ENCODE measurements at regions of chr19 and their contacts with region 1.

Region 1: DNA sequence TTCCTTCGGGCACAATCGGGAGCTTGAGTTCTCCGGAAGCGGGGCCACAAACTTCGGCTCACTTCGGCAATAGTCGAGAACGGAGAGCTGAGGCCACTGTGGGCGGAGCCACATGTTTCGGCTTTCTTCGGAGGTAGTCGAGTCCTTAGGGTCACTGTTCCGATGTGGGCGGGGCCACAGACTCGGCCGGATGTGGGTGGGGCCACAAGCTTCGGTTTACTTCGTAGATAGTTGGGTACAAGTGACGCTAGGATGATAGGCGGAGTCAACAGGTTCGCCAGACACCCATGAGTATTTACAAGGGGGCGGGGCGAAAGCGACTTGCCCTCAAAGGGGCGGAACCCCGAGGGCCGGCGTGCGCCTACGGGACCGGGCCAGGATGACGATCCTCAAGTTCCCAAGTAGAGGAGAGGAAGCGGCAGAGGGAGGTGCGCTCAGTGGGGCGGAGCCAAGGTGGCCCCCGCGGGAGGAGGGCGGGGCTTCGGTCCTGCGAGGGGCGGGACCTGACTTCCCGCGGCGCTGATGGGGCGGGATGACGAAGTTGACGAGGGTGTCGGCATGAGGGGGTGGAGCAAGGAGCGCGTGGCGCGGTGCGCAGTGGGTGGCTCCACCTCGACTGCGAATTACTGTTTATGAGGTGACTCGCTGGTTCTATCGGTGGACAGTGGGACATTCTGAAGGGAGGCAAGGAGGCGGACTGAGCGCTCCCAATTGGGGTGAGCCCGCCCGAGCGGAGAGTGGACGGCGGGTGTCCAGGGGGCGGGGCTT is 539 bp upstream of the MBOAT7 start:
- DNase-seq: peak; percentile 100
- H3K4me3 Mint-ChIP-seq: peak overlapping the region; percentile 85
- H3K27ac Mint-ChIP-seq: peak overlapping the region; percentile 99
- H3K4me1 Mint-ChIP-seq: peaks cover 41% of the 10 kb centered on the region
- H3K27me3 Mint-ChIP-seq: no peaks in the 10 kb centered on the region

Region 2: DNA sequence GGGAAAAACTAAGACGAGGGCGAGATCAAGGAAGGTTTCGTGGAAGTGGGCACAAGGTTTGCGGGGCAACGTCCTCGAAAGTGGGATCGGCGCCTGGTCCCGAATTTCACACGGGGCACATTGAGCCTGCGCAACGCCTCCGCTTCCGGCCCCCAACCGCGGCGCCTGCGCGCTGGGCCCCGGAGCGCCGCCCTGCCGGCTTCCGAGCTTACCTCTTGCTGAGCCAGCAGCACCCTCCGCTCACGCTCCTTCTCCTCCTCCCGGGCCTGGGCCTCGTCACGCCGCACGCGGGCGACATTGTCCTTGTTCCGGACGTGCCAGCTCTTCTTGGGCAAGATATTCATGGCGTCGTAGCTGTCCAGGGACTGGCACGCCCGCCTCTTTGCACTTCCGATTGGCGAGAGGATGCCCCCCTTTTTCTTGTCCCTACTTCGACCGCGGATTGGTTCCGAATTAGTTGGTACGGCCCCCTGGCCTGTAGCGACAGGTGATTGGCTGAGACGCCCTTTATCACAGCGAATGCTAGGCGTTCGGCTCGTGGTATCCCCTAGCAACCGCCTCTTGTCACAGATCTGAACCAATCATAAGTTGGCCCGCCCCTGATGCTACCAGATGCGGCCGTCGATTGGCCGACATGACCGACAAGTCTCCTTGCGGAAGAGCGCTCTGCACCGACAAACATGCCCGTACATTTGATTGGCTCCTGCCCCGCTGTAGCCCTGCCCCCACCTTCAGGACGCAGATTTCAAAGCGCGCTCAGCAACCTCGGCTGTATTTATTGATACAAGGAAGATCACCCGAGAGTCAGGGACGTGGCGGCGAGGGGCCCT is 30.4 kb before region 1 on chr19 and contains the start of gene LENG1:
- CTCF ChIA-PET with region 1: interaction called, 19 read pairs
- POLR2A ChIA-PET with region 1: interaction called, 19 read pairs
- DNase-seq: peak; percentile 100
- H3K4me3 Mint-ChIP-seq: peak within 1 kb of the TSS; percentile 94
- H3K27ac Mint-ChIP-seq: peak within 1 kb of the TSS; percentile 98
- H3K4me1 Mint-ChIP-seq: peaks cover 67% of the 10 kb centered on the region
- H3K27me3 Mint-ChIP-seq: peaks cover 1% of the 10 kb centered on the region
- total RNA-seq, gene LENG1: 8.3 to 9.2 TPM

Region 3: GRCh38 chr19:54168174-54168917 is 21.6 kb before region 1 on chr19:
- CTCF ChIA-PET with region 1: interaction called, 33 read pairs
- POLR2A ChIA-PET with region 1: interaction called, 13 read pairs
- DNase-seq: peak; percentile 90
- H3K4me3 Mint-ChIP-seq: no peak overlapping the region
- H3K27ac Mint-ChIP-seq: no peak overlapping the region
- H3K4me1 Mint-ChIP-seq: peaks cover 17% of the 10 kb centered on the region
- H3K27me3 Mint-ChIP-seq: peaks cover 1% of the 10 kb centered on the region

Region 4: DNA sequence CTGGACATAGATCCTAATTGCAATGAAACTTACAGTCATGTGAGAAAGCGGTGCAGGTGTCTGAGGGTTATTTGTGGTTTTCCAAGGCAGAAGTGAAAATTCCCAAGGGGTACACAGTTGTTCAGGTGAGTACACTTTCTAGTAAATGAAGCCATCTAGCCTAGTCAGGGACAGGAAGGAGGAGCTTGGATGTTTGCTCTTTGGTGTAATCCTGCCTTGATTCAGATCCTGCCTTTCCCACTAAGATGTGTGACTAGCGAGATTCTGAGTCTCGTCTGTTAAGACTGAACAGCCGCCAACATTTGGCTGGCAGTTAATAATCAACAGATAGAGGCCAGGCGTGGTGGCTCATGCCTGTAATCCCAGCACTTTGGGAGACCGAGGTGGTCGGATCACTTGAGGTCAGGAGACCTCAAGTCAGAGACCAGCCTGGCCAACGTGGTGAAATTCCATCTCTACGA is 13.3 kb after region 1 on chr19:
- CTCF ChIA-PET with region 1: interaction called, 16 read pairs
- POLR2A ChIA-PET with region 1: interaction called, 169 read pairs
- DNase-seq: no peak
- H3K4me3 Mint-ChIP-seq: peak overlapping the region; percentile 91
- H3K27ac Mint-ChIP-seq: peak overlapping the region; percentile 55
- H3K4me1 Mint-ChIP-seq: peaks cover 78% of the 10 kb centered on the region
- H3K27me3 Mint-ChIP-seq: no peaks in the 10 kb centered on the region

Region 5: DNA sequence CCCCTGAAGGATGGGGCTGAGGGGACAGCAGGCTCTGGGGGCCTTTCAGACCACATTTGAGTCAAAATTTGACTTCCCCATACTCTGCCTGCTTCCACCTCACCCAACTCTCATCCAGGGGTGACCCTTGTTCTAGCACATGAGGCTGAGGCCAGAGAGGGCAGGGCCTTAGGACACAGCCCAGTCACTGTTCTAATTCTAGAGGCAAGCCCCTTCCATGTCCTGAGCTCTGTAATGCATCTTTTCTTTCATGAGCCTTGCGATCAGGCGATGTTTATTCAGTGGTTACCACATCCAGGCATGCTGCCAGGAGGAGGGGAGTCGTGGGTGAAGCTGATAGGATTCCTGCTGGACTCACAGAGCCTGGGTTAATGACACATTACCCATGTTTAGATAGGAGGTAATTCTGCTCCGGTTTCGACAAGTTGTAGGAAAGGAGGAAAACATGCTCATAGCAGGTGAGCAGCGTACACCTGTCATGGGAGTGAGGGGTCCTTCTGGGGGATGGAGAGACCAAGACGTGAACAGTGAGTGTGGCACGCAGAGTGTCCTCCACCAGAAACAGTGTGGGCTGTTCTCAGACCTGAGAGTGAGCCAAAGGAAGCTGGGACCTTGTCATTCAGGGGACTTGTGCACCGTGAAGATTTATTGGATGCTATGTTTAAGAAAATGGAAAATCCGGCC is 20.0 kb after region 1 on chr19:
- CTCF ChIA-PET with region 1: interaction called, 7 read pairs
- POLR2A ChIA-PET with region 1: interaction called, 49 read pairs
- DNase-seq: no peak
- H3K4me3 Mint-ChIP-seq: no peak overlapping the region
- H3K27ac Mint-ChIP-seq: peak overlapping the region; percentile 74
- H3K4me1 Mint-ChIP-seq: peaks cover 71% of the 10 kb centered on the region
- H3K27me3 Mint-ChIP-seq: no peaks in the 10 kb centered on the region

Region 6: DNA sequence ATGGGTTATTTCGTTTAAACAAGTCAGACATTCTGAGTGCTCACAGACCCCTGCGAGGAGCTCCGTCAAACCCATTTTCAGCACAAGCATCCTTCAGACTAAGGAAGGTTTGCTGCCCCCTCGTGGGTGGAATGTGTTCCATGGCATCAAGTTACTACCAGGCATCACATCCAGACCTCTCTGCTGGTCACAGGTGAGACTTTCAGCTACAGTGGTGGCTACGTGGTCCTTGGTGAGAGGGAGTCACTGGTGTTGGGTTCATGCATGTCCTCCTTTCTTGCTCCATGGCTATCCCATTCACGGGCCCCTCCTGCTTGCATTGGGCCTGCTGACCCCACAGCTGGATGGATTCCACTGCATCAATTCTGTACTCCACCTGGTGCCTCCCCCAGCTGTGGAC is 76.2 kb after region 1 on chr19:
- CTCF ChIA-PET with region 1: interaction called, 43 read pairs
- POLR2A ChIA-PET with region 1: no interaction called
- DNase-seq: peak; percentile 77
- H3K4me3 Mint-ChIP-seq: no peak overlapping the region
- H3K27ac Mint-ChIP-seq: no peak overlapping the region
- H3K4me1 Mint-ChIP-seq: no peaks in the 10 kb centered on the region
- H3K27me3 Mint-ChIP-seq: peaks cover 36% of the 10 kb centered on the region